SK-N-SH (cell line): ENCODE measurements at regions of chr19 and their contacts with region 1.

Region 1: GRCh38 chr19:11293433-11294389 is 2.2 kb upstream of the TSPAN16 start:
- DNase-seq: peak; percentile 96
- H3K4me3 ChIP-seq: peak overlapping the region; percentile 24 to 55; a peak in 3 of 4 replicates
- H3K27ac ChIP-seq: peak overlapping the region; percentile 44 to 75; a peak in 3 of 4 replicates
- H3K4me1 ChIP-seq: peaks cover 0 to 3% of the 10 kb centered on the region in 2 experiments; a peak in 1 of 4 replicates
- H3K27me3 ChIP-seq: no peaks in the 10 kb centered on the region
- CTCF ChIP-seq: peak; percentile 98
- EP300 ChIP-seq: no peak
- RAD21 ChIP-seq: peak; percentile 93

Region 2: DNA sequence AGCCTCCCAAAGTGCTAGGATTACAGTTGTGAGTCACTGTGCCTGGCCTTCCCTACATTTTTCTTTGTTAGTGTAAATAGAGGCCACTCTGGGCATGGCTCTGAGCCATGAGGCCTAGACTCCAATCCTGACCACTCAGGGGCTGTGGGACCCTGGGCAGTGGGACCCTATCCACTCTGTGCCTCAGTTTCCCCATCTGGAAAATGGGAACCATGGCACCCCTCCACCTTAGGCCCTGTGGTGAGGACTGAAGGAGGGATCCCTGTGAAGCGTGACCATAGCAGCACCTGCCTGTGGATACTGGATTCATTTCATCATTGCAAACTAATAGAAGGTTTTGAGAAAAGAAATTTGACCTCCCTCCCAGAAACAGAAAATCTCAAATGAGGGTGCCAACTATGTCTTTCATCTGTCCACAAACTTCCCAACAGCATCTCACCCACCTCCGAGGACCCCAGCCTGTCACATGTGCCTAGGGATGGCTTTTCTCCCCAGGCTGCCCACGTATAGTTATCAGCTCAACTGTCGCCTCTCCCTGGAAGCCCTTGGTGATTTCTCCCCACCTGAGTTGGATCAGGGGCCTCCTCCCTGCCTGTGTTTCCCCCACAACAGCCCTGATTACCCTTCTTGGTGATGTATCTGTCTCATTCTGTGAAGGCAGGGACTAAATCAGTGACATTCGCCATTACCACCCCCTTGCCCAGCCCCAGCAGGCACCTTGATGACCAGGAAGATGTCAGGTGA is 48.7 kb before region 1 on chr19:
- CTCF ChIA-PET with region 1: no interaction called
- POLR2A ChIA-PET with region 1: no interaction called
- DNase-seq: no peak
- H3K4me3 ChIP-seq: no peak overlapping the region
- H3K27ac ChIP-seq: no peak overlapping the region
- H3K4me1 ChIP-seq: peaks cover 0 to 4% of the 10 kb centered on the region in 2 experiments; a peak in 1 of 4 replicates
- H3K27me3 ChIP-seq: no peaks in the 10 kb centered on the region
- CTCF ChIP-seq: no peak
- EP300 ChIP-seq: no peak
- RAD21 ChIP-seq: no peak

Region 3: GRCh38 chr19:11306334-11306733 is 12.6 kb after region 1 on chr19:
- CTCF ChIA-PET with region 1: interaction called, 20 read pairs
- POLR2A ChIA-PET with region 1: no interaction called
- DNase-seq: no peak
- H3K4me3 ChIP-seq: no peak overlapping the region
- H3K27ac ChIP-seq: no peak overlapping the region
- H3K4me1 ChIP-seq: no peaks in the 10 kb centered on the region
- H3K27me3 ChIP-seq: no peaks in the 10 kb centered on the region
- CTCF ChIP-seq: no peak
- EP300 ChIP-seq: no peak
- RAD21 ChIP-seq: no peak

Region 4: GRCh38 chr19:11339254-11340098 is 45.8 kb after region 1 on chr19 and contains the start of gene RAB3D:
- CTCF ChIA-PET with region 1: interaction called, 23 read pairs
- POLR2A ChIA-PET with region 1: interaction called, 3 read pairs
- DNase-seq: peak; percentile 99
- H3K4me3 ChIP-seq: peak within 1 kb of the TSS; percentile 66 to 88
- H3K27ac ChIP-seq: peak within 1 kb of the TSS in 1 of 2 experiments; percentile 66; a peak in 1 of 4 replicates
- H3K4me1 ChIP-seq: peaks cover 5 to 14% of the 10 kb centered on the region in 2 experiments; a peak in 2 of 4 replicates
- H3K27me3 ChIP-seq: no peaks in the 10 kb centered on the region
- CTCF ChIP-seq: no peak
- EP300 ChIP-seq: no peak
- RAD21 ChIP-seq: no peak
- polyA plus RNA-seq, gene RAB3D: 25.0 and 27.0 TPM in 2 replicates

Region 5: GRCh38 chr19:11374433-11375142 is 80.9 kb after region 1 on chr19 and contains the start of gene SWSAP1:
- CTCF ChIA-PET with region 1: interaction called, 66 read pairs
- POLR2A ChIA-PET with region 1: interaction called, 11 read pairs
- DNase-seq: peak; percentile 92
- H3K4me3 ChIP-seq: peak within 1 kb of the TSS; percentile 58 to 62
- H3K27ac ChIP-seq: peak within 1 kb of the TSS; percentile 88 to 94
- H3K4me1 ChIP-seq: peaks cover 16 to 22% of the 10 kb centered on the region in 2 experiments
- H3K27me3 ChIP-seq: no peaks in the 10 kb centered on the region
- CTCF ChIP-seq: no peak
- EP300 ChIP-seq: no peak
- RAD21 ChIP-seq: no peak
- polyA plus RNA-seq, gene SWSAP1: 2.8 and 3.0 TPM in 2 replicates

Region 6: DNA sequence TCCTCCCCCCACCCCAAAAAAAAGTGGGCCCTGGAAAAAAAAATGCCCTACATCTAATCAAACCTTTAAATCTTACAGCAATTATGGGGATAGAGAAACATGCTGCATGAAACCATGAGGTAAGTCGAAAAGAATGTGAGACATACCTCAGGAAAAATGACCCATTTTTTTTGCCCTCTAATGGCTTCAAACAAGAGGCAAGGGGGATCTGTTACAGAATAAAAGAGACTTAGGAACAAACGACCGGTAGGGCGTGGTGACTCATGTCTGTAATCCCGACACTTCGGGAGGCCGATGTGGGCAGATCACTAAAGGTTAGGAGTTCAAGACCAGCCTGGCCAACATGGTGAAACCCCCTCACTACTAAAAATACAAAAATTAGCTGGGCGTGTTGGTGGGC is 117.0 kb after region 1 on chr19:
- CTCF ChIA-PET with region 1: no interaction called
- POLR2A ChIA-PET with region 1: no interaction called
- DNase-seq: no peak
- H3K4me3 ChIP-seq: no peak overlapping the region
- H3K27ac ChIP-seq: no peak overlapping the region
- H3K4me1 ChIP-seq: no peaks in the 10 kb centered on the region
- H3K27me3 ChIP-seq: no peaks in the 10 kb centered on the region
- CTCF ChIP-seq: no peak
- EP300 ChIP-seq: no peak
- RAD21 ChIP-seq: no peak

Region 7: DNA sequence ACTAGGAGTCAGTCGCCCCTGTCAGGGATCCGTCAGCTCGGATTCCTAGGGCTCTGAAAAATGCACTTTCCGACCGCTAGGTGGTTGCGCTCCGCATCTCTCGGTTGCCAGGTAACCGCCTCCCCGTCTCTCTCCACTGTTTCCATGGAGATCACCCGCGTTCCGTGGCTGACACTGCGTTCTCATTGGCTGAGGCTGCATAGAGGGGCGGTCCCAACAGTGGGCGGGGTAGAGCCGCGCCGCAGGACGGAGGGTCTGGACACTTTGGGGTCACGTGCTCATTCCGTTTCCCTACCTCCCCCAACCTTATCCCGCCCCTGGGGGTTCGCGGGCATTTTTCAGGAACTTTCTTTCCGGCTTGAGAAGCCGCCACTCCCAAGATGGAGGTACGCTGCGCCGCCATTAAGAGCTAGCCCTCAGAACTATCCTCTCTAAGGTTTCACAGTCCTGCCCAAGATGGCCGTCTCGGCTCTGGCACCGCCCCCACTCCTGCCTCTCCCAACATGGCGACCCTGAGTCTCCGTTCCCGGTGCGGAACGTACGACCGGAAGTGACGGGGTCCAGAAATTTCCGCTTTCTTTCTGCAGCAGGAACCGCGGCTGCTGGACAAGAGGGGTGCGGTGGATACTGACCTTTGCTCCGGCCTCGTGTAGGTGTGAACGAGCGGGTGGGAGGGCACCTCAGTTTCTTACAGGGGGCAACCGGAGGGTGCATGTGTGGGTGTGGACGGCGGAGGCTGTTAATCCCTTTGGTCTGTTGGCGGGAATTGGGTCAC is 141.5 kb after region 1 on chr19 and contains the starts of genes ODAD3 and PRKCSH:
- CTCF ChIA-PET with region 1: interaction called, 13 read pairs
- POLR2A ChIA-PET with region 1: interaction called, 3 read pairs
- DNase-seq: peak; percentile 96
- H3K4me3 ChIP-seq: peak within 1 kb of the TSS; percentile 69 to 83
- H3K27ac ChIP-seq: peak within 1 kb of the TSS; percentile 73
- H3K4me1 ChIP-seq: peaks cover 5 to 12% of the 10 kb centered on the region in 2 experiments; a peak in 1 of 4 replicates
- H3K27me3 ChIP-seq: no peaks in the 10 kb centered on the region
- CTCF ChIP-seq: peak; percentile 77
- EP300 ChIP-seq: no peak
- RAD21 ChIP-seq: peak; percentile 38; the same call in 1 of the 2 replicates
- polyA plus RNA-seq, gene ODAD3: 3.2 and 4.2 TPM in 2 replicates
- polyA plus RNA-seq, gene PRKCSH: 198 and 502 TPM in 2 replicates

Region 8: GRCh38 chr19:11505032-11505503 is 211.4 kb after region 1 on chr19:
- CTCF ChIA-PET with region 1: no interaction called
- POLR2A ChIA-PET with region 1: no interaction called
- DNase-seq: peak; percentile 98
- H3K4me3 ChIP-seq: peak overlapping the region; percentile 64 to 78
- H3K27ac ChIP-seq: peak overlapping the region; percentile 84 to 89
- H3K4me1 ChIP-seq: peaks cover 9 to 12% of the 10 kb centered on the region in 2 experiments; a peak in 2 of 4 replicates
- H3K27me3 ChIP-seq: no peaks in the 10 kb centered on the region
- CTCF ChIP-seq: no peak
- EP300 ChIP-seq: no peak
- RAD21 ChIP-seq: no peak